Caco-2 (cell line): ENCODE measurements at regions of chr12 and their contacts with region 1.

Region 1: DNA sequence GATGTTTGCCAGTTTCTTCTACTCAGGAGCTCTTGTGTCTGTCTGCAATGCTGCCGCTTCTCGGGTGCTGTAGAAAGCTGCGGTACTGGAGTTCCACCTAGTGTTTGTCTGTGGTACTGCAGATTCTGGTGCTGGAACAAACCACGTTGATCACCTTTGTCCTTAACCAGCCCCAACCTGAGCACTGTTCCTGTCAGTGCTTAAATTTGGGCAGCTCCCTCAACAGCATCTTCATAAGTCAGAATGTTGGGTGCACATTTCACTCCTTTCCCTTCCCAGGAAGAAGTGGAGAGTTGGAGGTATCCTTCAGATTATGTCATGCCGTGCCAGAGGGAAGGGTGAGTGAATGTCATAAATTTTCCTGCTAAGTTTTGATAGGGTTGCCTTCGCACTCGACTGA is 48.7 kb upstream of the LALBA start:
- DNase-seq: peak; percentile 78 to 87
- H3K4me3 ChIP-seq: no peak overlapping the region
- H3K4me3 Mint-ChIP-seq: no peak overlapping the region
- H3K27ac Mint-ChIP-seq: no peak overlapping the region
- H3K4me1 ChIP-seq: no peaks in the 10 kb centered on the region
- H3K4me1 Mint-ChIP-seq: no peaks in the 10 kb centered on the region
- H3K27me3 ChIP-seq: no peaks in the 10 kb centered on the region
- H3K27me3 Mint-ChIP-seq: peaks cover 29% of the 10 kb centered on the region
- CTCF ChIP-seq: peak; percentile 97 to 98

Region 2: GRCh38 chr12:48286665-48287064 is 331.9 kb before region 1 on chr12:
- CTCF ChIA-PET with region 1: interaction called, 8 read pairs
- POLR2A ChIA-PET with region 1: no interaction called
- intact Hi-C with region 1: loop called (anchors 10 kb)
- DNase-seq: peak in 1 of 2 experiments; percentile 31
- H3K4me3 ChIP-seq: no peak overlapping the region
- H3K4me3 Mint-ChIP-seq: no peak overlapping the region
- H3K27ac Mint-ChIP-seq: no peak overlapping the region
- H3K4me1 ChIP-seq: no peaks in the 10 kb centered on the region
- H3K4me1 Mint-ChIP-seq: no peaks in the 10 kb centered on the region
- H3K27me3 ChIP-seq: no peaks in the 10 kb centered on the region
- H3K27me3 Mint-ChIP-seq: peaks cover 10% of the 10 kb centered on the region
- CTCF ChIP-seq: peak; percentile 44 to 63

Region 3: DNA sequence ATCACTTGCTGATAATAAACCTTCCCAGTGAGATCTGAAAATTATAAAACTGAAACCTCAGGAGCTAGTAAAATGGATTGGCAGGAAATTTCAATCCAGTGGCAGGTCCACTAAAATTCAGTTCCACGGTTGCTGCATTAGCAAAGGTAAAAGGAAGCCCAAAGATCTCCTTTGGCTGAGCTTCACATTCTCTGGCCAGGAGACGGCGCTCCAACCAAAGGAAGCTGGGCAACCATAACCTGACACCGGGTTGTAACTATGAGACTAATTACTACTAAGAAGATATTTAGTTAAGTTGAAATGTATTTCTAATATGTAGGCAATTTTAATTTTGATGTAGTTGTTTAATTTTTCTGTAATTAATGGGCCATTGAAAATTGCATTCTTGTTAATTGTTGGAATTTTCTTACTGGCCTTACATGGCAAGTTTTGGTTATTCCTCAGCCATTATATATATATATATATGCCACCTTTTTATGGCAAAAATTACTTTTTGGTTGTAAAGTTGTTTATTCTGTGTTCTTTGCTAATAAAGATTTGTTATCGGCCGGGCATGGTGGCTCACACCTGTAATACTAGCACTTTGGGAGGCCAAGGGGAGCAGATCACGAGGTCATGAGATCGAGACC is 76.1 kb before region 1 on chr12:
- CTCF ChIA-PET with region 1: interaction called, 93 read pairs
- POLR2A ChIA-PET with region 1: no interaction called
- intact Hi-C with region 1: loop called (anchors 1 kb)
- DNase-seq: peak; percentile 57 to 66
- H3K4me3 ChIP-seq: no peak overlapping the region
- H3K4me3 Mint-ChIP-seq: no peak overlapping the region
- H3K27ac Mint-ChIP-seq: no peak overlapping the region
- H3K4me1 ChIP-seq: no peaks in the 10 kb centered on the region
- H3K4me1 Mint-ChIP-seq: no peaks in the 10 kb centered on the region
- H3K27me3 ChIP-seq: no peaks in the 10 kb centered on the region
- H3K27me3 Mint-ChIP-seq: peaks cover 11% of the 10 kb centered on the region
- CTCF ChIP-seq: peak; percentile 57 to 90